Activated T-helper 2 cell treated with anti-CD3 and anti-CD28 coated beads, Interferon-gamma antibody, Interleukin-2, Interleukin-4, amounts not matched to agents 10 μg/mL and 5 μg/mL and 100 μg/mL, durations not matched to agents 14 hours and 24 hours and 36 hours (primary cell): ENCODE measurements at regions of chr2 and their contacts with region 1.

Region 1: DNA sequence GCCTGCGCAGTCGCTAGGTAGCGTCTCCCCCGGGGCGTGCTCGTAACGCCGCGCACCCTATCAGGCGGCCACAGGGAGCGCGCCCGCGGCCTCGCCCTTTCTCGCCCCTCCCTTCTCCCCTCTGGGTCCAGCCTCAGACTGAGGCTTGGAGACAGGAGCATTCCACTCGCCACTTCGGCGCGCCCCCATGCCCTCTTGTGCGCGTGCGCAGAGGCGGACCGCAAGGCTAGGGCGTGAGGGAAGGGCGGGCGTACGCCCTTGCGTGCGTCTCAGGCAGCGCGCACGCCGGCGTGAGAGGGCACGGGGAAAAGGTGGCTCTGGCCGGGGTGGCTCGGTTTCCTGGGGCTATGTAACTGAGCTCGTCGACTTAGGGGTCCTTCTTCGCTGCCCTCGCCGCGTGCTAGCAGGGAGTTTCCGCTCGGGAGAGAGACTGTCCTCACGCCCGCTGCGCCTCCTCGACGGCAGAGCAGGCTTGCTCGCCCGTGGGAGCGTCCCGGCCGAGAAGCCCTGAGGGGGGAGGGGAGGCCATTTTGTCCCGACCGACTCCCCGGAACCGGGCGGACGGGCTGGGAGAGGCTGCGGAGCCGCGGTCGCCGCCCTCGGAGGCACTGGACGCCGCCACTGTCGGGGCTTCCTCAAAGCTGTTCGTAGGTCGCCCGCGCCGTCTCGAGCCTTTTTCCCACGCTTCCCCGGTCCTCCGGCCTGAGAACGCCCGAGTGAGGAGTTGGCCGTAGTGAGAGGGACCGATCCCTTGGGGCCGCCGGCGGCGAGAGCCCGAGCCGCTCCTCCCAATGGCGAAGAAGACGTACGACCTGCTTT is at the start of gene RAB10:
- DNase-seq: peak; percentile 100
- H3K4me3 Mint-ChIP-seq: peak within 1 kb of the TSS; percentile 93
- H3K27ac Mint-ChIP-seq: peak within 1 kb of the TSS; percentile 88
- H3K4me1 Mint-ChIP-seq: peaks cover 19% of the 10 kb centered on the region
- H3K27me3 Mint-ChIP-seq: peaks cover 2% of the 10 kb centered on the region
- total RNA-seq, gene RAB10: 134 and 140 TPM in 2 replicates

Region 2: GRCh38 chr2:25582077-25582830 is 451.8 kb before region 1 on chr2:
- intact Hi-C with region 1: no loop called
- DNase-seq: no peak
- H3K4me3 Mint-ChIP-seq: no peak overlapping the region
- H3K27ac Mint-ChIP-seq: no peak overlapping the region
- H3K4me1 Mint-ChIP-seq: peaks cover 13% of the 10 kb centered on the region
- H3K27me3 Mint-ChIP-seq: no peaks in the 10 kb centered on the region

Region 3: DNA sequence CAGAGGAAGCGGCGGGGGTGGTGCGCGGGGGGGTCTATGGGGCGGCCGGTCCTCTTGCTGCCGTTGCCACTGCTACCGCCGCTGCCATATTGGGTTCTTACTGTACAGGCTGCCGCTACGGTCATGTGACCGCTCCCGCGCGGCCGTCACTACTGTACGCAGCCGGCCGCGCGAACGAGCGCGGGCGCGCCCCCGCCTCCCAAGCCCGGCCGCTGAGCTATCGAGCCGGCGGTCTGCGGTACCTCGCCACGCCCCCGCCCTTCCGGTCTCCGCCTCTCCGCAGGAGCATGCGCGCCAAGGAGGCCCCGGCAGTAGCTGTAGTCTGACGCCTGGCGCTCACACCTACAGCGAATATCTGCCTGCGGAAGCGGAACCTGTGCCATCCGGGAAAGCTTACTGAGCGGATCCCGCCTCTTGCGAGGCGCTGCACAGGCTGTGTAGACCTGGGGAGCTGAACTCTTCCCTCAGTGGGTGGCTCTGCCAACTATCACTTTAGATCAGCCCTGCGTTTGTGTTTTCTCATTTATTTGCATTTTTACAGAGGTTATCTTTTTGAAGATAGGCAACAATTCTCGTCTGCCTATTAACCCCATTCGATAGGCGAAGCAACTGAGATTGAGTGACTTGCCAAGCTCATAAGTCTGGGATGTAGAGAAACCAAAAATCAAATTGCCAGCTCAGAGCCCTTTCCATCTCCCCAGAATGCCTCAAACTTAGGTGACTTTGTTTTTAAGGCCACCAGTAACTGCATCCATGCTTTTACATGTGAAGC is 155.5 kb before region 1 on chr2 and contains the start of gene ASXL2:
- intact Hi-C with region 1: loop called (anchors 1 kb)
- DNase-seq: peak; percentile 98
- H3K4me3 Mint-ChIP-seq: peak within 1 kb of the TSS; percentile 95
- H3K27ac Mint-ChIP-seq: peak within 1 kb of the TSS; percentile 95
- H3K4me1 Mint-ChIP-seq: peaks cover 43% of the 10 kb centered on the region
- H3K27me3 Mint-ChIP-seq: no peaks in the 10 kb centered on the region
- total RNA-seq, gene ASXL2: 76.7 and 80.7 TPM in 2 replicates

Region 4: DNA sequence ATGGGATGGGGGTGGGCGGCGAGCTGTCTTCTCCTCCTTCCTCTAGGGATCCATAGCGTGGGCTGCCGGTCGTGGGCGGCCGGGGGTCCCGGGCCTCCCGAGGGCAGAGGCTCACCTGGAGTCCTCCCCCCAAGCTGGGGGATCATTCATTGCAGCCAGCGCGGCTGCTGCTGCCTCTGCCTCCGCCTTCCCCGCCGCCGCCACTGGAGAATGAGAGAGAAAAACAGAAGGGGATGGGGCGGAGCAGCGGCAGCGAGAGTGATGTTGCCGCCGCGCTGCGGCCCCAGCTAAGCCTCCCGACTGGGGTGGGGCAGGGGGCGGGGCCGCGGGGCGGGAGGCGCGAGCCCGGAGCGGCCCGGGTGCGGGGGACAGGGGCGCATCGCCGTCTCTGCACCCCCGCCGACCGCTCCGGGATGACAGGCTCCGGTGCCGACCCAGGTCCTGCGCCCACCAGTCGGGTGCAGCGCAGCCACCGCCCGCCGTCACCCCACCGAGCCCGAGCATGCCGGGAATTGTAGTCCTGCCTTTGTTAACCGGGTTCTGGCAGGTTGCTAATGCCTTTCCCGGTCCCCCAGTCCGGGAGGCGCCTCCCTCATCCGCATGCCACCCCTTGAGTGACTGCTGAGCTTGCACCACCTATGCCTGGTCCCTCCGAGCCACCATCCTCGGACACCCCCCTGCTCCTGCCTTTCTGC is 51.6 kb before region 1 on chr2 and contains the start of gene KIF3C:
- intact Hi-C with region 1: loop called (anchors 5 kb)
- DNase-seq: peak; percentile 73
- H3K4me3 Mint-ChIP-seq: peak within 1 kb of the TSS; percentile 91
- H3K27ac Mint-ChIP-seq: peak within 1 kb of the TSS; percentile 68
- H3K4me1 Mint-ChIP-seq: peaks cover 20% of the 10 kb centered on the region
- H3K27me3 Mint-ChIP-seq: no peaks in the 10 kb centered on the region
- total RNA-seq, gene KIF3C: 13.4 and 15.2 TPM in 2 replicates

Region 5: DNA sequence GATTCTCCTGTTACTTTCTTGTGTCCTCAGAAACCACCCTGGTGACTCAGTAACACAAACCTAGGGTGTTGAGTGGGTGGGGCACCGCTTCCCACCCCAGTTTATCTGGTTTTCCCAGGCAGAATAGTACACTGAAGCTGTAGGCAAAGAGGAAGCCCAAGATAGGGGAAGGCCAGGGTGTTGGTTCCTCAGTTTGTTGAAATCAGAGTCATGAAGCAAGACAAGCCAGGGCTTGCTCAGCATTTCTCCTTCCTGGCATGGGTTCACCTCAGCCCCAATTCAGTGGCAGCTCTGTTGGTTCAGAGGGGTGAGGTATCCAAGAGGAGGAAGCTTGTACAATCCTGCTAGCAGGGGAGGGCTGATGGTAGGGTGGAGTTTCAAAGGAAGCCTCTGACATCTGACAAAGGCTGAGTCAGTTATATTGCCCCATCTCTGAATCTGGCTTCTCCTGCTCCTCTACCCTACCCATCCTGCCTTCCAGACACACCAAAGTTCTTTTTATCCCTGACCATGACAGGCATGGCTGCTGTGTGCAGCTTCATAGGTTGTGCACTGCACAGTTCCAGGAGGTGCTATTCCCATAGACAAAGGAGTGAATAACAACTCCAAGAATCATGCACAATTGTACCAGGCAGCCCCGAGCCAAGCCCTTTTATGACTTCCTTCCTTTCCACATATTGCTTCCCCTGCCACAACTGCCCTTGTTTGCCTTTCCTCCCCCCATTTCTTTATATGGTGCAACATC is 25.0 kb before region 1 on chr2:
- intact Hi-C with region 1: no loop called
- DNase-seq: no peak
- H3K4me3 Mint-ChIP-seq: no peak overlapping the region
- H3K27ac Mint-ChIP-seq: no peak overlapping the region
- H3K4me1 Mint-ChIP-seq: peaks cover 2% of the 10 kb centered on the region
- H3K27me3 Mint-ChIP-seq: no peaks in the 10 kb centered on the region

Region 6: DNA sequence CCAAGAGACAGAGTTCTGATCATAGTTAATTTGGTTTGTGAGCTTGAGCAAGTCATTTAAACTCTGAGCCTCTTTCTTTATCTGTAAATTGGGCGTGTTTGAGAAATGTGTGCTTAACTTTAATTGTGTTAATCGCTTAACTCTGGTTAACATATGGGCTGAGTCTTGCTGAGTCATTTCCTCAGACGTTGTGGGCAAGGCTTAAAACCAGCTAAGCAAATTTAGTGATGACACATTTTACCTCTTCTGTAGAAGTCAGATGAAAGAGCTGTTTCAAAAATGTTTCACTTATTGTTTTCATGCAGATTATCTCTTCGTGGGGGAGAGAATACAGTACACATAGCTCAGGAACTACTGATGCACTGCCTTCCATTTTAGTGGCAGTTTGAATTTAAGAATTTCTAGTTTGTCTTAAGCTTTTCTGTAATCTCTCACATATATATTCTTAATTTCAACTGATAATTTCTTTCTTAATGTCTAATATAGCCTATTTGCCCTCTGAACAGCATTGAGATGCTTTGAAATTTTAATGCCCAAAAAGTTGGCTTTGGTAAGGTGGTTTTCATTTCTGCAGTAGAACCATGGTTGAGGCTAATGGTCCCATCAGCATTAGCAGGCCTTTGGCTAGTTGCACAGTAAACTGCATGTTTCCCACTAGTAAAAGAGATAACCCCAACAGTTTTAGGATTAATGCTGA is 34.7 kb after region 1 on chr2:
- intact Hi-C with region 1: loop called (anchors 1 kb)
- DNase-seq: peak; percentile 53
- H3K4me3 Mint-ChIP-seq: peak overlapping the region; percentile 27
- H3K27ac Mint-ChIP-seq: peak overlapping the region; percentile 93
- H3K4me1 Mint-ChIP-seq: peaks cover 53% of the 10 kb centered on the region
- H3K27me3 Mint-ChIP-seq: no peaks in the 10 kb centered on the region

Region 7: DNA sequence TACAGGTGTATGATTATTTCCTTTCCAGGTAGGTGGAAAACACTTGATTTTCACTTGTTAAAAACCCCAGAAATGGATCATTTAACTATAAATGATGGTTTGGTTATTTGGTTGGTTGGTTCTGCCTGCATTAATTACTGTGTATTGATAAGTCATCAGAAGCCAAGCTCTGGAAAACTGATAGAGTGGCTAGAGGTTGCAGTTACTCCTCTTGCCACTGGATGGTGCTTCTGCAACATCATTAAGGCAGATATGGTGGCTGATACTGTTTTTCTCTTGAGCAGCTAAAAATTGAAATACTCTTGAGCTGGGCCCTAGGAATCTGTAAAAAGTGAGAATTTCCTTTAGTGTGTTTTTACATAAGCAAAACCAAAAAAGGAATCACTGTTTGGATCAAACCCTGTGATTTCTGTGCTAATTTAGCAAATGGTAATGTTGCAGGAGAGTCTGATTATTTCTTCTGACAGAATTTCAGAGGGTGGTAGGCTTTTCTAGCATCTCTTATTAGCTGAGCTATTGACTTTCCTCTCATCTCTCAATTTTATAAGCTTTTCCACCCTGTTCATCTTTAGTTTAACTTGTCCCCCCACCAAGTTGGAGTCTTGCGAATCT is 54.1 kb after region 1 on chr2:
- intact Hi-C with region 1: loop called (anchors 5 kb)
- DNase-seq: no peak
- H3K4me3 Mint-ChIP-seq: no peak overlapping the region
- H3K27ac Mint-ChIP-seq: no peak overlapping the region
- H3K4me1 Mint-ChIP-seq: peaks cover 34% of the 10 kb centered on the region
- H3K27me3 Mint-ChIP-seq: no peaks in the 10 kb centered on the region

Region 8: GRCh38 chr2:26345545-26346453 is 311.8 kb after region 1 on chr2 and contains the start of gene SELENOI:
- intact Hi-C with region 1: no loop called
- DNase-seq: peak; percentile 99
- H3K4me3 Mint-ChIP-seq: peak within 1 kb of the TSS; percentile 99
- H3K27ac Mint-ChIP-seq: peak within 1 kb of the TSS; percentile 99
- H3K4me1 Mint-ChIP-seq: peaks cover 25% of the 10 kb centered on the region
- H3K27me3 Mint-ChIP-seq: no peaks in the 10 kb centered on the region
- total RNA-seq, gene SELENOI: 45.5 and 51.4 TPM in 2 replicates